Heart right ventricle (tissue), 16 donors: ENCODE measurements at regions of chr12 and their contacts with region 1.

Region 1: DNA sequence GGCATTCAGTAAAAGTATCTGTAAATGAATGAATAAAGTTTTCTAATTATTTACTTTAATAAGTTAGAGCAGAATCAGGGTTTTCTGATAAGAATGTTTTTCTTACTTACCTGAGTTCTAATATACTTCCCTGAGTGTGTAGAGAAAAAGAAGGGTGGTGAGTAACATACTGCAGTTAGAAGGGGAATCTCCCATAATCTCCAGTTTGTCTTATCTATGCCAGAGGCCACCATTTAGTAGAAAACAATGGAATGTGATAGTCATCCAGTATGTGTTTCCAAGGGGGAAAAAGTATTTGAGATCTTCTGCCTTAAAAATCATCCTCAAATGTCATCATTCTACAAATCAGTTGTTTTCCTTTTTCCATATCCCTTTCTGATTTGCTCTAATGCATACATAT is 56.5 kb upstream of the PAWR start:
- DNase-seq: no peak
- ATAC-seq: no peak
- H3K4me3 ChIP-seq: no peak overlapping the region
- H3K27ac ChIP-seq: no peak overlapping the region
- H3K4me1 ChIP-seq: no peaks in the 10 kb centered on the region
- H3K27me3 ChIP-seq: no peaks in the 10 kb centered on the region
- CTCF ChIP-seq: no peak

Region 2: DNA sequence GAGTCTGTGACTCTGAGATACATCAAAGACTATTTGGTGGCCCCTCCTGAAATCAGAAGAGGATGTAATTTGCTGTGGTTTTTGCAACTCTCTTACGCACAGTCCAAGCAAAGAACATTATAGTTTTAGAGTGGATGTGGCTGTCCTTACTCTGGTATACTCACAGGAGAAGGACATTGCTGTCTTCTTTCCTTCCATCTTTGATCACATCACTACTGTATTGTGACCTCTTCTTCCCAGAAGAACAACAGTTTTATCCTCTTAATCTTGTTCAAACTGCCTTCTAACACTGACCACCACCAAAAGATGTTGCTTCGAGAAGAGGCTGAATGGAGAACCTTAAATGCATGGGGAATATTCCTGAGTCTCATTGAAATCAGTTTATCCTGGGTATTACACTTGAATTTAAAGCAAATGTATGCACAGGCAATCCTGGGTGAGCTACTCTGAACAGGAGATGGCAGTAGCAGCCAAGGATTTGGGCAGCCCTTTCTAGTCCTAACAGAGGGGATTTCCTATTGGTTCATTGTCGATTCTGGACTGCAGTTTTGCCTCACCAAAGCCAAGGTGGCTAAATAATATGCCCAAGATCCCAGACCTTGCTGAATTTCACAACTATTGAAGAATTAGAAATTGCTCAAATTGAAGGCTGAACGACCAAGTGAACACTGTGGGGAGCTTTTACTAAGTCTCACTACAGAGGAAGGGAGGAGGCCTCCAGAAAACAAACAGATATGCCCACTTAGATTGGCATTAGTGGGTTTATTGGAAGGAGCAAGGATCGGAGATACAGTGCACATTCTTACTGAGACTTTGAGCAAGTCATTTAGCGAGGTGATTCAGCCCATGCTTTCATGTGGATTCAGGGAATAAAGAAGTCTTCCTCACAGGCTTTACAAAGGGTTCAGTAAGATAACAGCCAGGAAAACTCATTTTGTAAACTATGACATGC is 339.3 kb before region 1 on chr12:
- intact Hi-C with region 1: loop called in 1 of 10 experiments (anchors 10 kb)
- DNase-seq: peak in 1 of 2 donors; percentile 37
- ATAC-seq: peak in 7 of 8 donors; percentile 51 to 86 (median 63)
- H3K4me3 ChIP-seq: no peak overlapping the region
- H3K27ac ChIP-seq: no peak overlapping the region
- H3K4me1 ChIP-seq: peaks cover 0 to 7% (median 0%) of the 10 kb centered on the region in 9 donors
- H3K27me3 ChIP-seq: no peaks in the 10 kb centered on the region
- CTCF ChIP-seq: peak in 8 of 9 donors; percentile 25 to 69 (median 54)